SK-N-SH (cell line): ENCODE measurements at regions of chr5 and their contacts with region 1.

Region 1: GRCh38 chr5:39080597-39081204 is 6.5 kb upstream of the RICTOR start:
- DNase-seq: peak; percentile 63
- H3K4me3 ChIP-seq: peak overlapping the region in 1 of 2 experiments; percentile 28; a peak in 1 of 4 replicates
- H3K27ac ChIP-seq: no peak overlapping the region
- H3K4me1 ChIP-seq: peaks cover 0 to 4% of the 10 kb centered on the region in 2 experiments; a peak in 2 of 4 replicates
- H3K27me3 ChIP-seq: no peaks in the 10 kb centered on the region; the same call in 1 of the 2 replicates
- CTCF ChIP-seq: peak; percentile 79
- EP300 ChIP-seq: no peak
- RAD21 ChIP-seq: peak; percentile 77

Region 2: GRCh38 chr5:38997591-38997990 is 83.1 kb before region 1 on chr5:
- CTCF ChIA-PET with region 1: interaction called, 11 read pairs
- POLR2A ChIA-PET with region 1: no interaction called
- DNase-seq: no peak
- H3K4me3 ChIP-seq: no peak overlapping the region
- H3K27ac ChIP-seq: no peak overlapping the region
- H3K4me1 ChIP-seq: no peaks in the 10 kb centered on the region
- H3K27me3 ChIP-seq: no peaks in the 10 kb centered on the region
- CTCF ChIP-seq: no peak
- EP300 ChIP-seq: no peak
- RAD21 ChIP-seq: no peak

Region 3: GRCh38 chr5:39092581-39093350 is 12.1 kb after region 1 on chr5:
- CTCF ChIA-PET with region 1: interaction called, 18 read pairs
- POLR2A ChIA-PET with region 1: no interaction called
- DNase-seq: no peak
- H3K4me3 ChIP-seq: no peak overlapping the region
- H3K27ac ChIP-seq: peak overlapping the region in 1 of 2 experiments; percentile 33; a peak in 1 of 4 replicates
- H3K4me1 ChIP-seq: peaks cover 0 to 12% of the 10 kb centered on the region in 2 experiments; a peak in 1 of 4 replicates
- H3K27me3 ChIP-seq: no peaks in the 10 kb centered on the region
- CTCF ChIP-seq: no peak
- EP300 ChIP-seq: no peak
- RAD21 ChIP-seq: no peak

Region 4: DNA sequence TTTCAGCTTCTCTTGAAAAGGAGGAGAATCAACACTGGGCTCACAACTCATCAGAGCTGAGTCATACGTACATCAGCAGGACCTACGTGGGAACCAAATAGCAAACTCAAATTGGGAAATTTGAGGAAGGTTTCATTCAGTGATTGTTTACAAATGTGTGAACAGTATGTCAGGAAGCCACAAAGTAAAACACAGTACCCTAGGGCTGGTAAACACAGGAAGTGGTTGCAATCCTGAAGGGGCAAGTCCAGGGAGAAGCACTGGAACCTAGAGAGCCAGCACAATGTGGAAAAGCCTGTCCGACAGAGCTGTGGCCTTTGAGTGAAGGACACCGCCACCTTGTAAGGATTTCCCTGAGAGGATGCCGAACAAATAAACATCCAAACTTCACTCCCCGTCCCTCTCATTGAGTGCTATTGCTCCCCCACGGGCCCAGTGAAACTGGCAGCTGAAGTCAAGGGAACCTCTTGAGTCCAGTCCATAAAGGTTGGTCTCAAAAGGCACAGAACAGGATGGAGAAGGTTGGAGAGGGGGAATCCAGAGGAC is 20.2 kb after region 1 on chr5:
- CTCF ChIA-PET with region 1: interaction called, 12 read pairs
- POLR2A ChIA-PET with region 1: no interaction called
- DNase-seq: no peak
- H3K4me3 ChIP-seq: no peak overlapping the region
- H3K27ac ChIP-seq: peak overlapping the region in 1 of 2 experiments; percentile 82; a peak in 2 of 4 replicates
- H3K4me1 ChIP-seq: peaks cover 0 to 14% of the 10 kb centered on the region in 2 experiments; a peak in 2 of 4 replicates
- H3K27me3 ChIP-seq: no peaks in the 10 kb centered on the region
- CTCF ChIP-seq: no peak
- EP300 ChIP-seq: no peak
- RAD21 ChIP-seq: no peak

Region 5: GRCh38 chr5:39116347-39117170 is 35.9 kb after region 1 on chr5:
- CTCF ChIA-PET with region 1: interaction called, 21 read pairs
- POLR2A ChIA-PET with region 1: no interaction called
- DNase-seq: no peak
- H3K4me3 ChIP-seq: no peak overlapping the region
- H3K27ac ChIP-seq: no peak overlapping the region
- H3K4me1 ChIP-seq: no peaks in the 10 kb centered on the region
- H3K27me3 ChIP-seq: peaks cover 5% of the 10 kb centered on the region; the same call in 1 of the 2 replicates
- CTCF ChIP-seq: no peak
- EP300 ChIP-seq: no peak
- RAD21 ChIP-seq: no peak